ENCODE measurements at regions of chr2 and their contacts with region 1.

Region 1: DNA sequence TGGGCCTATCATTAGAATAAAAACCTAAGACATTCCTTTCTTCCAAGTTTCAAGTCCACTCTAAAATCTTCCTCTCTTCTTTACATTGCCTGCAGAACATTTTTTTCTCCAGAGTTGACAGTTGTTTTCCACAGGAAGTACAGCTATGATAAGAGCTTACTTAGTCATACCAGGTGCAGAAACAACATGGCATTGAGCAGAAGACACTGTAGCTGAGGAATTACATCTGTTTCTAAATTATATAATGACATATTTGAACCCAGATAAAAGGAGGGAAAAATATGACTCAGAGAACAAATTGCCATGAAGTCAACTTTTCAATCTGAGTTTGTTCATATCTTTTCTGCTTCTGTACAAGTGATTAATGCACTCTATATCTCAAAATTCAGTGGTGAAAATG is 30.2 kb downstream of the CMPK2 start:
- DNase-seq: no peak
- H3K4me3 Mint-ChIP-seq: no peak overlapping the region
- H3K27ac Mint-ChIP-seq: peak overlapping the region; percentile 36
- H3K4me1 Mint-ChIP-seq: peaks cover 33% of the 10 kb centered on the region
- H3K27me3 Mint-ChIP-seq: no peaks in the 10 kb centered on the region

Region 2: GRCh38 chr2:6865346-6866274 is 30.1 kb after region 1 on chr2 and contains the start of gene CMPK2:
- intact Hi-C with region 1: loop called (anchors 1 kb)
- DNase-seq: peak; percentile 90
- H3K4me3 Mint-ChIP-seq: peak within 1 kb of the TSS; percentile 99
- H3K27ac Mint-ChIP-seq: peak within 1 kb of the TSS; percentile 99
- H3K4me1 Mint-ChIP-seq: peaks cover 57% of the 10 kb centered on the region
- H3K27me3 Mint-ChIP-seq: no peaks in the 10 kb centered on the region
- total RNA-seq, gene CMPK2: 4.1 and 7.4 TPM in 2 replicates

Region 3: GRCh38 chr2:6917071-6917760 is 81.7 kb after region 1 on chr2 and contains the start of gene RNF144A:
- intact Hi-C with region 1: loop called (anchors 1 kb)
- DNase-seq: peak; percentile 71
- H3K4me3 Mint-ChIP-seq: peak within 1 kb of the TSS; percentile 74
- H3K27ac Mint-ChIP-seq: peak within 1 kb of the TSS; percentile 59
- H3K4me1 Mint-ChIP-seq: peaks cover 52% of the 10 kb centered on the region
- H3K27me3 Mint-ChIP-seq: peaks cover 16% of the 10 kb centered on the region
- total RNA-seq, gene RNF144A: 14.4 and 16.6 TPM in 2 replicates

Measured in activated T-helper 1 cell treated with anti-CD3 and anti-CD28 coated beads, Interleukin-12 subunit alpha, Interleukin-12 subunit beta, Interleukin-2, Interleukin-4 antibody, amounts not matched to agents 30 ng/mL and 10 ng/mL and 1 ng/mL, durations not matched to agents 14 hours and 24 hours and 36 hours (primary cell).